ENCODE measurements at regions of chr6 and their contacts with region 1.

Region 1: DNA sequence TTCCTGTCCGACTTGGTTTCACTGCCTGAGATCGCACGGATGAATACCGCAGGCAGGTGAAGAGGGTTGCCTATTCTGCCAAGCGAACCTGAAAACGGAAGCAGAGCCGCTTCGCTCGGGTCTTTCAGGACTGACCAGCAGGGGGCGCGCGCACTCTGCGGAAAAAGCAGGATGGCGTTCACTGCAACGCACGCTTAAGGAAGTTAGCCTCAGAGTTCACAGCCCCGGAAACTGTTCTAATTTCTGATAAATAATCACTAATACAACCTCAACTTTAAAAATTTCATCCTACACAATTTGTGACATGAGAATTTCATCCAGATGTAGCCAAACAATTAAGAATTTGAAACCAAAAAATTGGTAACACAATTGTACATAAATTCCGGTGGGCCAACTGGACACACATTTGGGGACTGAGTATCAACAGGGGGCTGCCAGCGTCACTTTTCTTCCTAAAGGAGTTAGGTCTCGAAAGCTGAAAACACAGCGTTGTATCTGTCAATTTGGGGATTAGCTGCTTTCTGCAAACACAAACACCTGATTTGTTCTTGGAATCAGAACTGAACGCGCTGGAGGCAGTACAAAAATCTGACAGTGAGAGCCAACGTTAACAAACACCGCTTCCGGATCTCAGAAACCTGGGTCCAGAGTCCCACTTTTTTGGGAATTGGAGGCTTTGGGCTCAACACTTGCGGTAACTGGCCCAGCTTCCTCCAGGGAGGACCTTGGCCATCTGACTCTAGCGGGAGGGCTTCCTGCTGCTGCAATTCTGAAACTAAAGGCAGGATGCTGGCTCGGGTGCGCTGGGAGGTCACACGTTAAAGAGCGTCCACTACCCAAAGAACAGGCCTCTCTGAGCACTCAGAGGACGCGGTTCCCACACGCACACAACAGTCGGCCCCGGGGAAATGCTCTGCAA is 8.8 kb downstream of the PXDC1 start:
- DNase-seq: peak; percentile 87
- CTCF ChIP-seq: peak; percentile 95

Region 2: GRCh38 chr6:3118353-3119039 is 624.2 kb before region 1 on chr6 and contains the start of gene BPHL:
- in situ Hi-C with region 1: loop called (anchors 25 kb)
- DNase-seq: peak; percentile 100
- CTCF ChIP-seq: no peak

Region 3: GRCh38 chr6:3987053-3987452 is 244.4 kb after region 1 on chr6:
- in situ Hi-C with region 1: loop called (anchors 10 kb)
- DNase-seq: no peak
- CTCF ChIP-seq: no peak

Region 4: DNA sequence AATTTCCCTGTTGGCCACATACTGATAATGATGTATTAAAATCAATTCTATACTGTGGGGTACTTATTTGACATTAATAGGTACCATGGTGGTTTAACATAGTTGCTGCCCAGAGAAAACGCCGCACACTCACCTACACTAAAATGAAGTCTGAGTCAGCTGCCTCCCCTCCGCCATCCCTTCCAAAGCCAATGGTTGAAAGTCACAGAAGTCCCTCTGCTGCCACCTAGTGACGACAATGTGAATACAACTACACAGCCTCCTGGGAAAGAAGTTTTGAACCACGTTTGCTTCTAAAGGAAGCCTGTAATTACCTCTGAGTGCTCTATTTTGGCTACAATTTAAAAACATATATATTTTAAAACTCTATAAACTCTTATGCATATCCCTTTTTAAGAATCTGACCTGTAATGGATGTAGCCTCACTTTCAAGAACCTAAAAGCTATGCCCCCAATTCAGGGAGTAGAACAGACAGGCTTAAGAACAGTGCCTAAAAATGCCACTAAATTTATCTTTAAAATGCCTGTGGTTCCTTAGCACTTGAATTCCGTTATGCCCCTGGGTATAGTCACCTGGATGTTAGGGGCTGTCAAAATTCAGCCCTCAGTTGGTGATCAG is 413.3 kb after region 1 on chr6:
- in situ Hi-C with region 1: loop called (anchors 25 kb)
- DNase-seq: peak; percentile 73
- CTCF ChIP-seq: peak; percentile 79